Activated CD4-positive, alpha-beta T cell treated with anti-CD3 and anti-CD28 coated beads for 36 hours (primary cell): ENCODE measurements at regions of chr11 and their contacts with region 1.

Region 1: GRCh38 chr11:118928108-118928870 is 2.6 kb upstream of the BCL9L start:
- DNase-seq: peak; percentile 95
- ATAC-seq: peak; percentile 51
- H3K4me3 Mint-ChIP-seq: peak overlapping the region; percentile 86
- H3K27ac Mint-ChIP-seq: peak overlapping the region; percentile 97
- H3K4me1 Mint-ChIP-seq: peaks cover 42% of the 10 kb centered on the region
- H3K27me3 Mint-ChIP-seq: no peaks in the 10 kb centered on the region

Region 2: GRCh38 chr11:118338637-118339061 is 589.6 kb before region 1 on chr11:
- CTCF ChIA-PET with region 1: no interaction called
- POLR2A ChIA-PET with region 1: no interaction called
- intact Hi-C with region 1: loop called in 1 of 2 experiments (anchors 5 kb)
- DNase-seq: peak; percentile 94
- ATAC-seq: peak; percentile 63
- H3K4me3 Mint-ChIP-seq: peak overlapping the region; percentile 83
- H3K27ac Mint-ChIP-seq: peak overlapping the region; percentile 100
- H3K4me1 Mint-ChIP-seq: peaks cover 45% of the 10 kb centered on the region
- H3K27me3 Mint-ChIP-seq: no peaks in the 10 kb centered on the region

Region 3: DNA sequence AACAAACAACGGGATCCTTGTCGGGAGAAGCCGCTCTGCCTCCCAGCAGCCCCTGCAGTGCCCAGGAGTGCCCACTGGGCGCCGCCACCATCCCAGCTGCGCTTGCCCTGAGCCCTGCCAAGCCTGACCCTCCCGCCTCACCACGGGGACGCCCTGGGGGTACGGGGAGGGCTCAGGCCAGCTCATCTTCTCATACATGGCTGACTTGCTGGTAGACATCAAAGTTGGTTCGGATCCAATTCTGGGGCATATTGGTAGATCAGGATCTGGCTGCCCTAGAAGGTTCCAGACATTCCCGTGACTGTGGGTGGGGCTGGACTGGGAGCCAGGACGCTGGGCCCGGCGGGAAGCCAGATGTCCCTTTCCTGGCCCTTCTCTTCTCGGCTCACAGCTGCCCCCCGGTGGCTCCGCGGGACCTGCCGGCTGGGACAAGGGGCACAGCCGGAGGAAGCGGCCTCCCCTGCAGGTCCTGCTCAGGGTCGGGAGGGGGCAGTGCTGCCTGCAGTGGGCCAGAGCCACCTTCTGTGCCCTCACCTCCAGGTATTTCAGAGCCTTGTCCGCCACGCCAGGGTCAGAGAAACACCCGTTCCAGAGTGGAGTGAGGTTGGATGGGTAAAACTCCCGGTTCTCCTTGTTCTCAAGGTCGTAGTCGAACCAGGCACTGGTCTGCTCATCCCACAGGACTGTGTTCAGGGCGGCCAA is 238.3 kb before region 1 on chr11:
- CTCF ChIA-PET with region 1: interaction called, 22 read pairs
- POLR2A ChIA-PET with region 1: no interaction called
- intact Hi-C with region 1: loop called (anchors 1 kb)
- DNase-seq: peak; percentile 95
- ATAC-seq: peak; percentile 95
- H3K4me3 Mint-ChIP-seq: peak overlapping the region; percentile 65
- H3K27ac Mint-ChIP-seq: peak overlapping the region; percentile 84
- H3K4me1 Mint-ChIP-seq: peaks cover 46% of the 10 kb centered on the region
- H3K27me3 Mint-ChIP-seq: no peaks in the 10 kb centered on the region

Region 4: DNA sequence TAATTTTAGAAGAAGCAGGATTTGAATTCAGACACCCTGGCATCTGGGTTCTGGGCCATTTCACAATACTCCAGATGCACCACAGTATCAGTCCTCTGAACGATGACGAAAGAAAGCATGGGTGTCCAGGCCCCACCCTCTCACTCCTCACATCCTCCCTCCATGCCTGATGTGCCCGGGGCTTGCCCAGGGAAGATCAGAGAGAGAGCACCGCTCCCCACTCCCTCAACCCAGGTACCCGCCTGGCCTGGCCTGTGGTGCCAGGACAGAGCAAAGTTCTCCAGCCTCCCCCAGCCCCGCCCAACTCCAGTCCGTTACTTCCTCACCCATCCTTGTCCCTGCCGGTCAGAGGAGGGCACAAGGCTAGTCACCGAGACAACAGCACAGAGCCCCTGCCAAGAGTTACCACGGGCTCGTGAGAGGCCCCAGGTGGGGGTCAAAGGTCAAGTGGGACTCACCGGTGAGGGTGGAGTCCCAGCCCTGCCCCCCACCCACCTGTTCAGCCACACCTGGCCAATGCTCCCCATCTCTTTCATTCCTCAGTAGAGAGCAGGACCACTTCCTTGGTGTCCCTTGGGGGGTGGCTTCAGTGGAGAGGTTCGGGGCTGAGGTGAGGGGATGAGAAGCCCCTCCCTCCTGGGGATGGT is 10.7 kb before region 1 on chr11:
- CTCF ChIA-PET with region 1: interaction called, 96 read pairs
- POLR2A ChIA-PET with region 1: interaction called, 26 read pairs
- intact Hi-C with region 1: loop called (anchors 1 kb)
- DNase-seq: peak; percentile 81
- ATAC-seq: peak; percentile 48
- H3K4me3 Mint-ChIP-seq: peak overlapping the region; percentile 86
- H3K27ac Mint-ChIP-seq: peak overlapping the region; percentile 100
- H3K4me1 Mint-ChIP-seq: peaks cover 84% of the 10 kb centered on the region
- H3K27me3 Mint-ChIP-seq: no peaks in the 10 kb centered on the region

Region 5: DNA sequence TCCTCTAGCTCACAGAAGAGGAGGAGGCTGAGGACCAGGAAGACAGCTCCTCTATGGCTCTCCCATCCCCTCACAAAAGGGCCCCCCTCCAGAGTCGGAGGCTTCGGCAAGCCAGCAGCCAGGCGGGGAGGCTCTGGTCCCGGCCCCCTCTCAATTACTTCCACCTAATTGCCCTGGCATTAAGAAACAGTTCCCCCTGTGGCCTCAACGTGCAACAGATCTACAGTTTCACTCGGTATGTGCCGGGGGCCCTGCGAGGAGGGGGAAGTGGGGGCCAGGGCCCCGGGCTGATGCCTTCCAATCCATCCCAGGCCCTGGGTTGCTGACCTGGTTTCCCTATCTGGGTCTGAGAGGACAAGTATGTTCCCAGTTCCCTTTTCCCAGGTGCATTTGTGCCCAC is 51.1 kb after region 1 on chr11:
- CTCF ChIA-PET with region 1: no interaction called
- POLR2A ChIA-PET with region 1: no interaction called
- intact Hi-C with region 1: no loop called
- DNase-seq: no peak
- ATAC-seq: peak; percentile 42
- H3K4me3 Mint-ChIP-seq: no peak overlapping the region
- H3K27ac Mint-ChIP-seq: no peak overlapping the region
- H3K4me1 Mint-ChIP-seq: no peaks in the 10 kb centered on the region
- H3K27me3 Mint-ChIP-seq: peaks cover 7% of the 10 kb centered on the region

Region 6: DNA sequence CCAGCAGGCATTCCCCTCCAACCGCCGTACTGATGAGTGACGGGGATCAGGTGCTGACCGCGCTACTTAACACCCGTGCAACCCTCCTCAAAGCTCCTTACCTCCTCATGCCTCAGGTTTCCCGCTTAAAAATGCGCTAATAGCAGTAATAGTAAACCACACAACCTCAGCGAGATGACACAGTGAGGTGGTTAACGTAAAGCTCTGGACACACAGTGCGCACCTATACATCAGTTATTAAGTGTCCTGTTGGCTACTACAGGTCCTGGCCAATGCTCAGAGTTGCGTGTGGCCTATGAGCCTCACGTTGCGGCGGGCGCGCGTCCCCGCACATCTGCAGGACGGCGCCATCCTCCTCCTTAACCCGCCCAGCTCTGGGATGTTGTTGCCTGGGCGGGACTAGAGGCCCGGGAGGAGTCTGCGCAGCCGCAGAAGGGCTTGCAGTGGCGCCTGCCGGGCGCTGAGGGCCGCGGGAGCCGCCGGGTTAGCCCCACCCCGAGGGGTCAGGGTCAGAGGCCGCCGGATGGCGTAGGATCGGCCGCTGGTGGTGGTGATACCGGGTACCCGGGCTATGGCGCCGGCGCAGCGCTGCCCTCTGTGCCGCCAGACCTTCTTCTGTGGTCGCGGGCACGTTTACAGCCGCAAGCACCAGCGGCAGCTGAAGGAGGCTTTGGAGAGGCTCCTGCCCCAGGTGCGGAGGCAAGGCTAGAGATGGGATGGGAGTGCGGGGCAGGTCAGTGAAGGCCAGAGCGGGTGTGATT is 69.5 kb after region 1 on chr11 and contains the start of gene CENATAC:
- CTCF ChIA-PET with region 1: interaction called, 4 read pairs
- POLR2A ChIA-PET with region 1: no interaction called
- intact Hi-C with region 1: loop called (anchors 1 kb)
- DNase-seq: peak; percentile 98
- ATAC-seq: peak; percentile 93
- H3K4me3 Mint-ChIP-seq: peak within 1 kb of the TSS; percentile 88
- H3K27ac Mint-ChIP-seq: peak within 1 kb of the TSS; percentile 98
- H3K4me1 Mint-ChIP-seq: peaks cover 32% of the 10 kb centered on the region
- H3K27me3 Mint-ChIP-seq: no peaks in the 10 kb centered on the region
- total RNA-seq, gene CENATAC: 23.7 to 26.2 TPM

Region 7: DNA sequence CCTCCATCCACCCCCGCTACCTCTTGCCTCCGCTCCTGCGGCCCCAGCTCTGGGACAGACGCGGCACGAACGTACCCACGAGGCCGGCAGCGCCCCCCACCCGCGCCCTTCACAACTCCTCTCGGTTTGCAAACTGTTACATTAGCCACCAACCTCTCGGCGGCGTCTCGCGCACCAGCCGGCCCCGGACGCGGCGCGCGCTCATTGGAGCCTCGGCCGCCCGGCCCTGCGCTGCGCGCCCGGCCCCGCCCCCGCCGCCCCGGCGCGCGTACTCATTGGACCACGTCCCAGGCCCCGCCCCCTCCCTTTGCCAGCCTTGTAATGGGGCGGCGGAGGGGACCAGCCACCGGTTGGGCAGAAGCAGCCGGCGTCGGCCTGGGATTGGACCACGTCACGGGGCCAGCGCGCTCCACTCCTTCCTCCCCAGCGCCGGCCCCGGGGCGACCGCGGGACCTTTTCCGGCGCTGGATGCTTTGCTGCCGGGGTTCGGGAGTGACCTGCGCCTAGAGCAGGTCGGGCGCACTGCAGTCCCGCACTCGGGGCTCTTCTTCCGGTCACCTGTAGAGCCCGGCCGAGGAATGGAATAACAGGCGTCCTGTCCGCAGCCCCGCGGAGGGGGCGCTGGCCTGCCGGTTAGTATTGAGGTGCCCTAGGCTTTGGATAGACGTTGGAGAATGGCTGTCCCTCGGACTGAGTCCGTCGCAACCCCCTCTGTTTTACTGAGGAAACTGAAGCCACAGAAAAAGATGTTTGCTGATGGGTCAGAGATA is 128.9 kb after region 1 on chr11 and contains the start of gene HYOU1:
- CTCF ChIA-PET with region 1: no interaction called
- POLR2A ChIA-PET with region 1: no interaction called
- intact Hi-C with region 1: loop called in 1 of 2 experiments (anchors 1 kb)
- DNase-seq: peak; percentile 100
- ATAC-seq: peak; percentile 96
- H3K4me3 Mint-ChIP-seq: peak within 1 kb of the TSS; percentile 82
- H3K27ac Mint-ChIP-seq: peak within 1 kb of the TSS; percentile 94
- H3K4me1 Mint-ChIP-seq: peaks cover 34% of the 10 kb centered on the region
- H3K27me3 Mint-ChIP-seq: no peaks in the 10 kb centered on the region
- total RNA-seq, gene HYOU1: 104 to 114 TPM

Region 8: DNA sequence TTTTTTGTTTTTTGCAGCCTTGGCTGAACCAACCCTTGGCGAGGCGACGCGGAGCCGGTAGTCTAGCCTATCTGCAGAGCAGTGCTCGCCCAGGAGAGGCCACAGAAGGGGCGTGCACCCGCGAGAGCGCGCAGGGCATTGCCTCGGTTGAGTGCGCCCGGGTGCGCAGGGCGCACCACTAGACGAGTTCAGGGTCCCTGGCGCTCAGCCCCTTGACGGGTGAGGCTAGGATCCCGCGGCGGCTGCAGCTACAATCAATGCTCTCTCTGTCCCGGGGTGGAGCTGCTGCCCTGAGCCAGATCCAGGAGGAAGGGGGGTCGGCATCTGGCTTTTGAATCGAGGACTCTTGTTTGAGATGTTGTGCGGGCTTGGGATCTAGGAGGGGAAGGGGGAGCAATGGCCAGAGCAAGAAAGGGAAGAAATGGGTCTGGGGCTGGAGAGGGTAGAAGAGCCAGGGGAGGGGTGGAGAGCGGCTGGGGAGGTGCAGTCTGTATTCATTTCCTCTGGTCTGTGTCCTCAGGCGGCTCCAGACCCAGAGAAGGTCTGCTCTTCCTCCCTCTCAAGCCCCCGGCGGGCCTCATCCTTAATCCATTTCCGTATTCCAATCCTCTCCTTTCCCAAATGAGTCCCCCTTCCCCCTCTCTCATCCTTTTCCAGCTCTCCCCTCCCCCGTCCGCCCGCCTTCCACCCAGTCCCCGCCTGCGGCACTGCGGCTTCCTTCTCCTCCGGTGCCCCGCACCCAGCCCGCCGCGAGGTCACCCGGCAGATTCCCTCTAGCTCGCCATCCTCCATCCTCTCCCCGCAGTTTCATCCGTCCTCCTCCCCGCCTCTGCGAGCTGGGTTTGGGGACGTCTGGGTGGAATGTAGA is 493.9 kb after region 1 on chr11:
- CTCF ChIA-PET with region 1: no interaction called
- POLR2A ChIA-PET with region 1: no interaction called
- intact Hi-C with region 1: no loop called
- DNase-seq: peak; percentile 24
- ATAC-seq: peak; percentile 57
- H3K4me3 Mint-ChIP-seq: peak overlapping the region; percentile 55
- H3K27ac Mint-ChIP-seq: no peak overlapping the region
- H3K4me1 Mint-ChIP-seq: peaks cover 20% of the 10 kb centered on the region
- H3K27me3 Mint-ChIP-seq: peaks cover 43% of the 10 kb centered on the region